ENCODE measurements at regions of chr2 and their contacts with region 1.

Region 1: DNA sequence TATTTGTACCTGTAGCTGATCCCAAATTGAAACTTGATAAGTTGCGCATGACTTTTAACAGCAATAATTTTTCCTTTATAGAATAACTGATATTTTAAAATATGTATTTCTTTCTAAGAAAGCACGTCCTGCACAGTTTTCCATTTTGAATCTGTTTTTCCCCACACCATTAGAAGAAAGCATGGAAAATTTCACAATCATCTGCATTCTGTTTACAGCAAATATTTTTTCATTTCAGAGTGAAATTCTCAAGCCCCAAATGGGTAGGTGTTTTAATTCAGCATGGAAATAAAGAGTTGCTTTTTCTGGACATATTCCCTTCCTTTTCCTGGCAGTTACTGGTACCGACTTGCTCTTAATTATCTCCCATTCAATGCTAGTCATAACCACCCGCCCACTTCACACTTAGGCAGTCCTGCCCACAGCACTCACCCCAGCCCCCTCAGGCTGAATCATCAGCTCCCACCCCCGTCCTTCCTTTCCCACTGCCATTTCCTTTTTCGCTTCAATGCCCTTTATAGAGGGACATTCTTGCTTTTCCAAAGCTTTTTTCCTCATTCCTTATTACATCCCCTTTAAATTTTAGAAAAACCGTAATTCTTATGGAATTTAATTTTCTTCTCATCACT is 89.2 kb upstream of the GLS start:
- DNase-seq: peak; percentile 78
- ATAC-seq: peak; percentile 71
- H3K4me3 Mint-ChIP-seq: peak overlapping the region; percentile 15
- H3K27ac Mint-ChIP-seq: peak overlapping the region; percentile 74
- H3K4me1 Mint-ChIP-seq: peaks cover 59% of the 10 kb centered on the region
- H3K27me3 Mint-ChIP-seq: no peaks in the 10 kb centered on the region
- CTCF ChIP-seq: no peak

Region 2: GRCh38 chr2:190771726-190772125 is 19.7 kb before region 1 on chr2:
- CTCF ChIA-PET with region 1: no interaction called
- POLR2A ChIA-PET with region 1: no interaction called
- intact Hi-C with region 1: no loop called
- DNase-seq: no peak
- ATAC-seq: no peak
- H3K4me3 Mint-ChIP-seq: no peak overlapping the region
- H3K27ac Mint-ChIP-seq: no peak overlapping the region
- H3K4me1 Mint-ChIP-seq: peaks cover 3% of the 10 kb centered on the region
- H3K27me3 Mint-ChIP-seq: peaks cover 2% of the 10 kb centered on the region
- CTCF ChIP-seq: no peak

Region 3: GRCh38 chr2:190843874-190844699 is 52.6 kb after region 1 on chr2:
- CTCF ChIA-PET with region 1: no interaction called
- POLR2A ChIA-PET with region 1: interaction called, 3 read pairs
- intact Hi-C with region 1: loop called (anchors 5 kb)
- DNase-seq: peak; percentile 77
- ATAC-seq: peak; percentile 92
- H3K4me3 Mint-ChIP-seq: peak overlapping the region; percentile 25
- H3K27ac Mint-ChIP-seq: peak overlapping the region; percentile 92
- H3K4me1 Mint-ChIP-seq: peaks cover 31% of the 10 kb centered on the region
- H3K27me3 Mint-ChIP-seq: no peaks in the 10 kb centered on the region
- CTCF ChIP-seq: no peak

Measured in activated CD8-positive, alpha-beta T cell treated with anti-CD3 and anti-CD28 coated beads for 36 hours (primary cell).